K562 (cell line): ENCODE measurements at regions of chr4 and their contacts with region 1.

Region 1: DNA sequence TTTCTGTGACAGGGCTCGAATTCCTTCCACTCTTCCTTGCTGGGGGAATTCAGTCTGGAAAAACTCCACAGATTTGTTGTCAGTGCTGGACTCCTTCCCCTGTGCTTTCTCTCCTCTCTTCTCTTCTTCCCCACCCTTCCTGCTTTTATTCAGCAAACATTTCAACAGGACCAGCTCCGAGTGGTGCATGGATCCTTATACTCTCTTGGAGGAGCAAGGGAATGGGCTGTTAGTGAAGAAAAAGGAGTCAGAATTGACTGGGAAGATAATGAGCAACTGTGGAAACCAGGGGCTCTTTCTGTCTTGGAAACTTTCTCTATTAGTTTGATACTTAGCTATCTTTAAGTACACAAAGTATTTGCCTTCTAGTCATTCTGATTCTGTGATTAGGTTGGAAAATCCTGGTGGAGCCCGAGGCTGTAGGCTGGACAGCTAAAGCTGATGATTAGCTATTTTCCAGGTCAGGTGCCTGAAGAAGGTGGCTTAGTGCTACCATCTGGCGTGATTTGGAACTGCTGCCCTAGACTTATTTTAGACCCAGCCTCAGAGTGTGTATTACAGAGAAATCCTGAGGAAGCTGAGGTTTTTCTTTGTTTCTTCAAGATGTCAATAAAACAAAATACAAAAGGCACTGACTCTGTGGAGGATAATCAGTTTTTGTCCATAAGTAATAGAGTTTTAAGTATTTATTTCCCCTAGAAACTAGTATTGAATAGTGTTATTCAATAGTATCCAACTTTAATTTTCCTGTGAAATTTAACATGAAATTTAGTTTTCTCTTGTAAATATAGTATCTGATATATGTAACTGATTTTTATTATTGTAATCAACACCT is 38.4 kb downstream of the NAP1L5 start:
- DNase-seq: peak; percentile 13 to 41 (median 32)
- ATAC-seq: peak; percentile 95
- H3K4me3 ChIP-seq: no peak overlapping the region
- H3K27ac ChIP-seq: no peak overlapping the region
- H3K4me1 ChIP-seq: no peaks in the 10 kb centered on the region
- H3K27me3 ChIP-seq: no peaks in the 10 kb centered on the region
- CTCF ChIP-seq: peak; percentile 52 to 75 (median 56); a peak in 5 of 6 replicates
- EP300 ChIP-seq: no peak
- POLR2A ChIP-seq: no peak
- RAD21 ChIP-seq: peak; percentile 73

Region 2: DNA sequence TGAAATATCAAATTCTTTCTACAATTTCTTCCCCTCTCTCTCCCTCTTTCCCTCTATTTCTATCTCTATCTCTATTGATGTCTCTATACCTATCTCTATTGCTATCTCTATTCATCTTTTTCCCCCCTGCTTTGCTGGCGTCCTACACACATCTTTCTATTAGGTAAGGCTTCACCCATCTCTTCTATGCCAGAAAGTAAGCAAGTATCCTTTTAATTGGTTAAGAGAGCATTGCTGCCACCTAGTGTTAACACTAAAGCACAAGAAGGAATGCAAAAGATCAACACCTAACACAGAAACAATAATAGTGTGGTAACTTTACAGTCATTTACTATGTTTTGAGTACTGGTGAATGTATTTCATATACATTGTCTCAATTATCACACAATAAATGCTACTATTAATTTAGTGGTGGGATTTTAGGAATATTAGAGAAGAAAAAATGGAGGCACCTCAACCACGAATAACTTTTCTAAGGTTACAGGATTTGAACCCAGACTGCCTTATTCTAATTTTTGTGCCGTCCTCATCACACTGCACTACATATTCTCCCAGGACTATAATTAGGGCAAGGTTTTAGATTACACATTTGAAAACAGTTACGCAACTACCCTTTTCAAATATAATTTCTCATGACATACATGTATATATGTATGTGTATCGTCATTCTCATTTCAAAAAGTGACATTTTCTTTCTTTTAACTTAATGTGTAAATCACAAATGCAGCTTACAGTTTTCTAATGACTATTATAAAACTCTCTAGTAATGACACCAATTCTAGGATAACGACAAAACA is 1763.4 kb before region 1 on chr4:
- CTCF ChIA-PET with region 1: no interaction called
- POLR2A ChIA-PET with region 1: no interaction called
- in situ Hi-C with region 1: no loop called
- intact Hi-C with region 1: no loop called
- DNase-seq: peak; percentile 46 to 72 (median 50)
- ATAC-seq: peak; percentile 62
- H3K4me3 ChIP-seq: no peak overlapping the region
- H3K27ac ChIP-seq: no peak overlapping the region
- H3K4me1 ChIP-seq: peaks cover 6 to 10% of the 10 kb centered on the region in 2 experiments; a peak in 3 of 5 replicates
- H3K27me3 ChIP-seq: no peaks in the 10 kb centered on the region; a peak in 2 of 5 replicates
- CTCF ChIP-seq: peak; percentile 65 to 85 (median 69); a peak in 5 of 6 replicates
- EP300 ChIP-seq: no peak
- POLR2A ChIP-seq: no peak
- RAD21 ChIP-seq: peak; percentile 80 to 89

Region 3: DNA sequence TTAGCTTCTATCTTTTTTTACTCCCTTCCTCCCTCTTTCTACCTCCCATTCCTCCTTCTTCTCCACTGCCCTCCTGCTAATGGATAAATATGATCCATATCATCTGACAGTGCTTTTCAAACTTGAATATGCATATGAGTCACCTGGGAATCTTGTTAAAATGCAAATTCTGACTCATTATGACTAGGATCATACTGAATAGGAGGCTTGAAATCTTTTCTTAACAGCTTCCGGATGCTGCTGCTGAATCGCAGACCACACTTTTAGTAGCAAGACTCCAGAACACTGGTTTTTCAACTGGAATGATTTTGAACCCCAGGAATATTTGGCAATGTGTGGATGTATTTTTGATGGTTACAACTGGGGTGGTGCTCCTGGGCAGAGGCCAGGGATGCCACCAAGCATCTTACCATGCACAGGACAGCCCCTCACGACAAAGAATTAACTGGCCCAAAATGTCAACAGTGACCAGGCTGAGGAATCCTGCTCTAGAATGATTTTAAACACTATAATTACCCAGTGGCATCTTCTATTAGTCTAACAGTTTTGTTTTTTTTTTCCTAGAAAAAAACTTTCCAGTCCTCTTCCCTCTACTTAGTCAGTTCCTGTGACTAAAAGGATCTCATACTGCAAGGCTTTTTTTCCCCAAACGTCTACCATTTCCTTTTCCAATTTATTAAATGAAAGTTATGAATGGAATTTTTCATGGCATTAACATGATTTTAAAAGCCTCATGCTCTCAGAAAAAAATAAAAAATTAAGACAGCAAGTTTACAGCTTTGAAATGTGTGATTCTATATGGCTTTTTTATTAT is 125.1 kb before region 1 on chr4:
- CTCF ChIA-PET with region 1: interaction called, 8 read pairs
- POLR2A ChIA-PET with region 1: no interaction called
- in situ Hi-C with region 1: loop called (anchors 5 kb)
- intact Hi-C with region 1: loop called (anchors 1 kb)
- DNase-seq: no peak
- ATAC-seq: no peak
- H3K4me3 ChIP-seq: no peak overlapping the region
- H3K27ac ChIP-seq: no peak overlapping the region
- H3K4me1 ChIP-seq: peaks cover 0 to 3% of the 10 kb centered on the region in 2 experiments; a peak in 1 of 5 replicates
- H3K27me3 ChIP-seq: no peaks in the 10 kb centered on the region
- CTCF ChIP-seq: no peak
- EP300 ChIP-seq: no peak
- POLR2A ChIP-seq: no peak
- RAD21 ChIP-seq: no peak